Activated CD4-positive, alpha-beta T cell treated with anti-CD3 and anti-CD28 coated beads for 36 hours (primary cell): ENCODE measurements at regions of chr16 and their contacts with region 1.

Region 1: DNA sequence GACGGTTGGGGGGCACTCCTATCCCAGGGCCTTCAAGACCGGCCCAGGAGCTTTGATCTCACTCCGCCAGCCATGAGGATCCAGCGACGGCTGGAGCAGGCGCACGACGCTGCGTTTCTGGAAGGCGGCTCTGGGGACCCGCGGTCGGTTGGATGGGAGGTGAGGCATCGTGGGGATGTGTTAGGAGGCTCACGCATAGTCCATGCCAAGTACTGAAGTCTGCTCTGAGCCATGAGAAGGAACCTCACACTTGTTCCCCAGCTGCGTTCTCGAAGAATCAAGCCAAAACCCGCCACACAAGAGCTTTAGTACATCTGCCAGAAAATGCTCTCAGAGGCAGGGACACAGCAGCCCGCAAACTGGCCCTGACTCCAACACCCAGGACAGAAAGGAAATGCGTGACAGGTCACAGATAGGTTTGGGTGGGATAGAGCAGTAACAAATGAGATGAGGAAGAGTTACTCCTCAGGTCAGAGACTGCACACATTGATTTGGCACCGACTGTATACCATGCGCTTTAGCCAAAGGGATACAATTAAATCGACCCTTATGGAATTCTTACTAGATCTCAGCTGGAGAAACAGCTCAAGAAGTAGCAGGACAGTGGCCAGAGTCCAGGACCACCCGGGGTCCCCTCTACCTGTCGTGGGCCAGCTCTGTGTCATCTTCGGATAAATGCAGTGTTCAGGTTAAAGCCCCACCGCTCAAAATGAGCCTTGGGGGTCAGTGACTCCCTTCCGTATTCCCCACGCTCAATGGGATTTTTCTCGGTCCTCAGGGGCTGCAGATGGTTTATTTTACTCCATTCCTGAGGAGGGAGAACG is 6.7 kb upstream of the GSG1L start:
- DNase-seq: no peak
- ATAC-seq: no peak
- H3K4me3 Mint-ChIP-seq: no peak overlapping the region
- H3K27ac Mint-ChIP-seq: no peak overlapping the region
- H3K4me1 Mint-ChIP-seq: no peaks in the 10 kb centered on the region
- H3K27me3 Mint-ChIP-seq: peaks cover 7% of the 10 kb centered on the region

Region 2: GRCh38 chr16:27549859-27550581 is 520.2 kb before region 1 on chr16 and contains the starts of genes GTF3C1 and KATNIP:
- CTCF ChIA-PET with region 1: no interaction called
- POLR2A ChIA-PET with region 1: no interaction called
- intact Hi-C with region 1: no loop called
- DNase-seq: peak; percentile 100
- ATAC-seq: peak; percentile 98
- H3K4me3 Mint-ChIP-seq: peak within 1 kb of the TSS; percentile 94
- H3K27ac Mint-ChIP-seq: peak within 1 kb of the TSS; percentile 81
- H3K4me1 Mint-ChIP-seq: peaks cover 35% of the 10 kb centered on the region
- H3K27me3 Mint-ChIP-seq: no peaks in the 10 kb centered on the region
- total RNA-seq, gene GTF3C1: 48.8 to 50.7 TPM
- total RNA-seq, gene KATNIP: 12.3 to 12.8 TPM

Region 3: GRCh38 chr16:27639561-27640276 is 430.5 kb before region 1 on chr16:
- CTCF ChIA-PET with region 1: interaction called, 4 read pairs
- POLR2A ChIA-PET with region 1: no interaction called
- intact Hi-C with region 1: loop called in 1 of 2 experiments (anchors 2 kb)
- DNase-seq: peak; percentile 57
- ATAC-seq: peak; percentile 83
- H3K4me3 Mint-ChIP-seq: no peak overlapping the region
- H3K27ac Mint-ChIP-seq: no peak overlapping the region
- H3K4me1 Mint-ChIP-seq: no peaks in the 10 kb centered on the region
- H3K27me3 Mint-ChIP-seq: no peaks in the 10 kb centered on the region

Region 4: DNA sequence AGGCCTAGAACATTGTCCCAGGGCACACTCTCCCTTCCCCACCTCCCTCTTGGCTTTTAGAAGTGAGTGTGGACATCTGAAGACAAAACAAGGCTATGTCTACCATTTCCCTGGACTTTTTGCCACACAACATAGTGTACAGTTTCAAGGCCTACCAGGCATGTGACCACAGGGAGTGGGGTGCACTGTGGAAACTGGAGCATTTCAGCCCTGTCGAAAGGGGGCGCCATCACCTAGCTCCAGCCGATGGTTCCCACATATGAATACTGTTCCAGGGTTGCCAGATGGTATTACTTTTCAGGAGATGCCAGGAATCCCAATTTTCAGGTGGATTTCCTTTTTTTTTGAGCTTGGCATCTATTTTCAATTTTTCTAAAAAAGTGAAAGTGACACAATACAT is 379.6 kb before region 1 on chr16:
- CTCF ChIA-PET with region 1: interaction called, 4 read pairs
- POLR2A ChIA-PET with region 1: no interaction called
- intact Hi-C with region 1: loop called in 1 of 2 experiments (anchors 2 kb)
- DNase-seq: peak; percentile 47
- ATAC-seq: no peak
- H3K4me3 Mint-ChIP-seq: no peak overlapping the region
- H3K27ac Mint-ChIP-seq: no peak overlapping the region
- H3K4me1 Mint-ChIP-seq: no peaks in the 10 kb centered on the region
- H3K27me3 Mint-ChIP-seq: no peaks in the 10 kb centered on the region

Region 5: DNA sequence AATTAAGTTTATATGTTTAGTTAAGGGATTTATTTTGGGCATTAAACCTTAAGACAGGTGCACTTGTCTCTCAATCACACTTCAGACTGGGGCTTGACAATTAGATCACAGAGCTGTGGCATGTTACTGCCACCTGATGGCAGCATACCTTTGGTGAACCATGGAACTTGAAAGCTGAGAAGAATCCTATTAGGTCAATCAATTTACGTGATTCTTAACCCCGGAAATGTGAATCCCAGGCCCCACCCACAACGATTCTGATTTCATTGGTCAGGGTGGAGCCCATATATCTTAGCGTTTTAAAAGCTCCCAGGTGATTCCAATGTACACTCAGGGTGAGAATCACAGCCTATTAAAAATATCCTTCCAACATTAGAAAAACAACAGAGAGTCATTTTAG is 97.7 kb before region 1 on chr16:
- CTCF ChIA-PET with region 1: interaction called, 35 read pairs
- POLR2A ChIA-PET with region 1: no interaction called
- intact Hi-C with region 1: loop called (anchors 1 kb)
- DNase-seq: peak; percentile 66
- ATAC-seq: peak; percentile 80
- H3K4me3 Mint-ChIP-seq: no peak overlapping the region
- H3K27ac Mint-ChIP-seq: no peak overlapping the region
- H3K4me1 Mint-ChIP-seq: peaks cover 3% of the 10 kb centered on the region
- H3K27me3 Mint-ChIP-seq: peaks cover 12% of the 10 kb centered on the region

Region 6: DNA sequence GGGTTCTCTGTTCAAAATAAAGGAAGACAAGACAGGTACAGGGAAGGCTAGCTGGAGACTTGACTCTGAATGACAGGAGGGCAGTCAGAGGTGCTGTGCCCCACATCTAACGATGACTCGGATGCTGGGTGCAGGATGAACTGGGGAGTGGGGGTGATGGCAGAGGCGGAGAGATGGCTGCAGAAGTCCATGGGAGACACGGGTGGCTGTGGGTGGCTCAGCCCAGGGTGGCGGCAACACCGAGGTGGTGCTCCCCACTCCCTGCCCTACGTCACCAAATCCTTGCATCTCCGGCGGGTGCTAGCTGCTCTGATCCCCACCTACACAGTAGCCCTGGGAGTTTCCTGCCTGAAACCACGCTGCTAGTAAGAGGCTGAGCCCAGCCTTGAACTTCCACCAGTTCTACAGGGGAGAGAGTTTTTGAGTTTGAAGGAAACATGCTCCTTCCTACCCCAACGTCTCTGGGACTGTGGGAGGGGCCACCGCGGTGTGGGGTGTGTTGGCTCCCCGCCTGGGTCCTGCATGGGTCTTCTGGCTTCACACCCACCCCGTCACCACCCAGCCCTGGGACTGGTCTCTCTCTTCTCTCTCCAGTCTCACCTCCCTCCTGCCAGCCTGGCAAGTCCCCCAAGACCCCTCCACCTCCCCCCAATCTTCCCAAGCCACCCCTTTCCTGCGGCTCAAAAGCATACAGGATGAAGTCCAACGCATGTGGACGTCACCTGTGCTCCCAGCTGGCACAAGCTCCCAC is 11.2 kb before region 1 on chr16:
- CTCF ChIA-PET with region 1: interaction called, 10 read pairs
- POLR2A ChIA-PET with region 1: interaction called, 3 read pairs
- intact Hi-C with region 1: no loop called
- DNase-seq: peak; percentile 18
- ATAC-seq: no peak
- H3K4me3 Mint-ChIP-seq: no peak overlapping the region
- H3K27ac Mint-ChIP-seq: no peak overlapping the region
- H3K4me1 Mint-ChIP-seq: peaks cover 5% of the 10 kb centered on the region
- H3K27me3 Mint-ChIP-seq: peaks cover 43% of the 10 kb centered on the region

Region 7: DNA sequence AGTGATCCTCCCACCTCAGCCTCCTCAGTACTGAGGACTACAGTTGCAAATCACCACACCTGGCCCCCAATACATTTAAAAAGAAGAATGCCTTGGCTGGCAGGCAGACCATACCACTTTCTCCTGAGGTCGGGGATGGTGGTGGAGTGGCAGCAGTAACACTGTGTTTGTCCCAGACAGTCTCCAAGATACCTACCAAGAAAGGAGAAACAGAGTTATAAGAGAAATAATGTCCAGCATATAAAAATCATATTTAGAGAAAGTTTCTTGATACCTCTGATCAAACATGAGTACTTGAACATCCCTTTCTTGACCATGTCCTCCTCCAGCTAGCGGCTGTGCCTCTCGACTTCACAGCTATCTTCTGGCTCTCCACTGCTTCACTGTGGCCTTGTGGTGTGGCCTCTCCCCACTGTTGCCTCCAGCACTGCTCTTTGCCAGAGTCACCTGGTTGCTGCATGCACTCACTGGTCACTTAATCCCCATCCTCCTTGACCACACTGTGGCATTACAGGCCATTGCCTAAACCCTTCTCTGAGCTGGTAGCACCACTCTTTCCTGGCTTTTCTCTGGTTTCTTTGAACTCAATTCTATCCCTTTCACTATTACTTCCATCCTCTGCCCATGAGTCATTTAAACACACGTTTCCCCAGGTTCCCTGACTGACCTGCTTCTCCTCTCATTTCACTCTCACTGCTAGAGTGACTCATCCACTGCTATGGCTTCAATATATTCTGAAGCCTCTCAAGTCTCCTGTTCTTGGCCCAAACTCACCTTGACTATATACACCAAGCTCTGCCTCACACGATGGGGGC is 96.4 kb after region 1 on chr16:
- CTCF ChIA-PET with region 1: no interaction called
- POLR2A ChIA-PET with region 1: no interaction called
- intact Hi-C with region 1: no loop called
- DNase-seq: peak; percentile 53
- ATAC-seq: peak; percentile 92
- H3K4me3 Mint-ChIP-seq: no peak overlapping the region
- H3K27ac Mint-ChIP-seq: peak overlapping the region; percentile 67
- H3K4me1 Mint-ChIP-seq: peaks cover 83% of the 10 kb centered on the region
- H3K27me3 Mint-ChIP-seq: no peaks in the 10 kb centered on the region

Region 8: GRCh38 chr16:28218104-28218503 is 147.9 kb after region 1 on chr16:
- CTCF ChIA-PET with region 1: interaction called, 14 read pairs
- POLR2A ChIA-PET with region 1: no interaction called
- intact Hi-C with region 1: loop called in 1 of 2 experiments (anchors 5 kb)
- DNase-seq: peak; percentile 76
- ATAC-seq: peak; percentile 100
- H3K4me3 Mint-ChIP-seq: no peak overlapping the region
- H3K27ac Mint-ChIP-seq: no peak overlapping the region
- H3K4me1 Mint-ChIP-seq: peaks cover 3% of the 10 kb centered on the region
- H3K27me3 Mint-ChIP-seq: no peaks in the 10 kb centered on the region

Region 9: DNA sequence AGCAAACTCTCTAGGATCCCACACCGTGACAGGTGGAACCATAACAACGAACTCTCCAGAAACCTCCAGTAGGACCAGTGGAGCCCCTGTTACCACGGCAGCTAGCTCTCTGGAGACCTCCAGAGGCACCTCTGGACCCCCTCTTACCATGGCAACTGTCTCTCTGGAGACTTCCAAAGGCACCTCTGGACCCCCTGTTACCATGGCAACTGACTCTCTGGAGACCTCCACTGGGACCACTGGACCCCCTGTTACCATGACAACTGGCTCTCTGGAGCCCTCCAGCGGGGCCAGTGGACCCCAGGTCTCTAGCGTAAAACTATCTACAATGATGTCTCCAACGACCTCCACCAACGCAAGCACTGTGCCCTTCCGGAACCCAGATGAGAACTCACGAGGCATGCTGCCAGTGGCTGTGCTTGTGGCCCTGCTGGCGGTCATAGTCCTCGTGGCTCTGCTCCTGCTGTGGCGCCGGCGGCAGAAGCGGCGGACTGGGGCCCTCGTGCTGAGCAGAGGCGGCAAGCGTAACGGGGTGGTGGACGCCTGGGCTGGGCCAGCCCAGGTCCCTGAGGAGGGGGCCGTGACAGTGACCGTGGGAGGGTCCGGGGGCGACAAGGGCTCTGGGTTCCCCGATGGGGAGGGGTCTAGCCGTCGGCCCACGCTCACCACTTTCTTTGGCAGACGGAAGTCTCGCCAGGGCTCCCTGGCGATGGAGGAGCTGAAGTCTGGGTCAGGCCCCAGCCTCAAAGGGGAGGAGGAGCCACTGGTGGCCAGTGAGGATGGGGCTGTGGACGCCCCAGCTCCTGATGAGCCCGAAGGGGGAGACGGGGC is 1594.1 kb after region 1 on chr16:
- CTCF ChIA-PET with region 1: no interaction called
- POLR2A ChIA-PET with region 1: no interaction called
- intact Hi-C with region 1: no loop called
- DNase-seq: peak; percentile 77
- ATAC-seq: peak; percentile 31
- H3K4me3 Mint-ChIP-seq: peak overlapping the region; percentile 99
- H3K27ac Mint-ChIP-seq: peak overlapping the region; percentile 97
- H3K4me1 Mint-ChIP-seq: peaks cover 51% of the 10 kb centered on the region
- H3K27me3 Mint-ChIP-seq: no peaks in the 10 kb centered on the region